Activated naive CD4-positive, alpha-beta T cell treated with anti-CD3 and anti-CD28 coated beads for 36 hours (primary cell): ENCODE measurements at regions of chr1 and their contacts with region 1.

Region 1: GRCh38 chr1:173824331-173825081 is at the starts of genes CENPL and DARS2:
- DNase-seq: peak; percentile 95
- H3K4me3 Mint-ChIP-seq: peak within 1 kb of the TSS; percentile 93
- H3K27ac Mint-ChIP-seq: peak within 1 kb of the TSS; percentile 98
- H3K4me1 Mint-ChIP-seq: peaks cover 46% of the 10 kb centered on the region
- H3K27me3 Mint-ChIP-seq: no peaks in the 10 kb centered on the region
- total RNA-seq, gene CENPL: 31.1 to 31.9 TPM
- total RNA-seq, gene DARS2: 42.7 to 44.1 TPM

Region 2: DNA sequence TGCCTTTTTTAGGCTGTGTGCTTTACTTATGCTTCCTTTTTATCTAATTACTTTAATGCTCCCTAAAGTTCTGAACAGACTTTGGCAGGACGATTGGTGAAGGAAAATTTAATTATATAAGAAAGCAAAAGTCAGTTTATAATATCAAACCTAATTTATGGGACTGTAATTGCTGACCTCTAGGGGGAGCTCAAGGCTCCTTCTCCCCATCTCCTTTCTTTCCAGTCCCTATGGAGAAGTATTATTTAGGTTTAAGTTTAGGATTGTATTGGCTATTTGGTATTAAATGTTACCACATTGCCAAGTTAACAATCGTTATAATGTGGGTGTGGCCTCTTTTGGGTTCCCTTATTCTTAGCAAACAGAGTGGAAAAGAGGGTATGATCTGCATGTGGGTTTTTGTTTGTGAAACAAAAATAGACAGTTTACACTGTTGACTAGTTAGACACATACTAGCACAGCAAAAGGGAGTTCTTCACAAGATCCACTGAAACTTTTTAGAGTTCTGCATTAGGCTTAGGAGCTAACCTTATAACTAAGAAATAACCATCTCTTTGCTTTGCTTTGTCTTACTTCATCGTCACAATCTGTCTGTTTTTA is 569.2 kb before region 1 on chr1:
- CTCF ChIA-PET with region 1: no interaction called
- intact Hi-C with region 1: loop called (anchors 1 kb)
- DNase-seq: peak; percentile 30
- H3K4me3 Mint-ChIP-seq: no peak overlapping the region
- H3K27ac Mint-ChIP-seq: no peak overlapping the region
- H3K4me1 Mint-ChIP-seq: no peaks in the 10 kb centered on the region
- H3K27me3 Mint-ChIP-seq: no peaks in the 10 kb centered on the region

Region 3: DNA sequence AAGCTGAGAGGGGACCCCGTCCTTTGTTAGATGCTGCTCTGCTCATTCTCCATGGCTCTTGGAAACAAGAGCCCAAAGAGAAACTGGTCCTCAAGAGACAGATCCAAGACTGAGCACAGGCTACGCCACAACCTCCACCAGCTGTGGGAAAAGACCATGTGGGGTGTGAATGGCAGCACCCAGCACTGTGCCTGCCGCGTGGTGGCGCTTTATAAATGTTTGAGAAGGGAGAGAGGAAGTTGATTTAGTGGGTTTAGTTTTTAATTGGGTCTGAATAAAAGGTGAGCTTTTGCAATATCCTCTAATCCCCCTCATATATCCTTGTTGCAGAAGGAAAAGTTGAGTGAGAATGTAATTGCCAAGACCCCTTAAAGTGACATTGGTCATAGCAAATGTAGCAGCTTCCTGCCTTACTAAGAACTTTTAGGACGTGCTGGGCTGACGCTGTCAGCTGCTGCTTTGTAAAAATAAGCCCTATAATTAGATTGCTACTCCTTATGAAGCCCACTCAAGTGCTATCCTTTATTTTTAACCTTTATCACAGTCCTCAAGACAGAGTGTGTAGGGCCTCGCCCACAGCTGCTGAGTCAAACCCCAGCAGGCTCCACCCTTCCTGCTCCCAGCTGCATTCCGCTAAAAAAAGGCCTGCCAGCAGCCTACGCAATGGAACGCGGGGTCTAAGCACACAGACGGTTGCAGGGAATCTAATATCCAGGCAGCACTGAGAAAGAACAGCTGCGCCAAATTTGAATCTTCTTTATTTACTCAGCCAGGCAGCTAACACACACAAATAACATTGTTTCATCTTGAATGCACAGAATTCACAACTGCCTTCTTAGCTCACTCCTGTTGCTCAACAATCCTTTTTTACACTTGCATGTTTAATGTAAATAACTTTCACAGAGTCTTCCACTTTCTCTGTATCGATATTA is 394.8 kb before region 1 on chr1:
- CTCF ChIA-PET with region 1: interaction called, 32 read pairs
- intact Hi-C with region 1: loop called (anchors 1 kb)
- DNase-seq: peak; percentile 86
- H3K4me3 Mint-ChIP-seq: peak overlapping the region; percentile 42
- H3K27ac Mint-ChIP-seq: peak overlapping the region; percentile 43
- H3K4me1 Mint-ChIP-seq: peaks cover 16% of the 10 kb centered on the region
- H3K27me3 Mint-ChIP-seq: no peaks in the 10 kb centered on the region

Region 4: DNA sequence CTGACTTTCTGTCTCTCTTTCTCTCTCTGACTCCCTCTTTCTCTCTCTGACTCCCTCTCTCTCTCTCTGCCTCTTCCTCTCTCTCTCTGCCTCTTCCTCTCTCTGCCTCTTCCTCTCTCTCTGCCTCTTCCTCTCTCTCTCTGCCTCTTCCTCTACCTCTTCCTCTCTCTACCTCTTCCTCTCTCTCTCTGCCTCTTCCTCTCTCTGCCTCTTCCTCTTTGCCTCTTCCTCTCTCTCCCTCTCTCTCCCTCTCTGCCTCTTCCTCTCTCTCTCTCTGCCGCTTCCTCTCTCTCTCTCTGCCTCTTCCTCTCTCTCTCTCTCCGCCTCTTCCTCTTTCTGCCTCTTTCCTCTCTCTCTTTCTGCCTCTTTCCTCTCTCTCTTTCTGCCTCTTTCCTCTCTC is 136.2 kb before region 1 on chr1:
- CTCF ChIA-PET with region 1: no interaction called
- intact Hi-C with region 1: loop called (anchors 1 kb)
- DNase-seq: no peak
- H3K4me3 Mint-ChIP-seq: no peak overlapping the region
- H3K27ac Mint-ChIP-seq: no peak overlapping the region
- H3K4me1 Mint-ChIP-seq: peaks cover 4% of the 10 kb centered on the region
- H3K27me3 Mint-ChIP-seq: no peaks in the 10 kb centered on the region

Region 5: GRCh38 chr1:174022080-174022975 is 197.8 kb after region 1 on chr1 and contains the start of gene RC3H1:
- CTCF ChIA-PET with region 1: no interaction called
- intact Hi-C with region 1: loop called (anchors 1 kb)
- DNase-seq: peak; percentile 92
- H3K4me3 Mint-ChIP-seq: peak within 1 kb of the TSS; percentile 93
- H3K27ac Mint-ChIP-seq: peak within 1 kb of the TSS; percentile 94
- H3K4me1 Mint-ChIP-seq: peaks cover 32% of the 10 kb centered on the region
- H3K27me3 Mint-ChIP-seq: no peaks in the 10 kb centered on the region
- total RNA-seq, gene RC3H1: 24.2 to 27.1 TPM

Region 6: GRCh38 chr1:174204697-174205308 is 380.3 kb after region 1 on chr1:
- CTCF ChIA-PET with region 1: no interaction called
- intact Hi-C with region 1: loop called (anchors 5 kb)
- DNase-seq: peak; percentile 25
- H3K4me3 Mint-ChIP-seq: no peak overlapping the region
- H3K27ac Mint-ChIP-seq: peak overlapping the region; percentile 55
- H3K4me1 Mint-ChIP-seq: peaks cover 48% of the 10 kb centered on the region
- H3K27me3 Mint-ChIP-seq: no peaks in the 10 kb centered on the region